ENCODE measurements at regions of chr7 and their contacts with region 1.

Region 1: GRCh38 chr7:115145512-115145911 is 223.6 kb downstream of the MDFIC start:
- H3K4me3 Mint-ChIP-seq: no peak overlapping the region
- H3K27ac Mint-ChIP-seq: peak overlapping the region; percentile 71
- H3K4me1 Mint-ChIP-seq: peaks cover 12% of the 10 kb centered on the region
- H3K27me3 Mint-ChIP-seq: no peaks in the 10 kb centered on the region

Region 2: DNA sequence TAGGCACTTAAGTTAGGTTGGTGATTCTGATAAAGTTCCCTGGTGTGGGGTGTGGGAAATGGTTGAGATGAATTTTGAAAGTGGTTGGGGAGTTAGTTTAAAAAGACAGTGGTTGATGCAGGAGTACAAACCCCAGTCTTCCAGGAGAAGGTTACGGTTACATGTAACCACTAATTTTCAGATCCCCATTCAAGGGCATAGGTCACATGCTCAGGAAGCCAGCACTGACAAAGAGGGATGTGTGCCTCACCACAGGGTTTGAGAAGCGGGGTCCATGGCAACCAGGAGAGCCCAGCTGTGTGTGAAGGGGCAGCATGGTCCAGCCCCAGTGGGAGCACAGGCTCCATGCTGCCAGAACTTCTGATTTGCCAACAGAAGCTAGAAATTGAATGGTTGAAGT is 79.5 kb before region 1 on chr7:
- intact Hi-C with region 1: loop called (anchors 5 kb)
- H3K4me3 Mint-ChIP-seq: no peak overlapping the region
- H3K27ac Mint-ChIP-seq: peak overlapping the region; percentile 21
- H3K4me1 Mint-ChIP-seq: peaks cover 28% of the 10 kb centered on the region
- H3K27me3 Mint-ChIP-seq: no peaks in the 10 kb centered on the region

Measured in dendritic cell treated with granulocyte-macrophage colony-stimulating factor and Interleukin-4, amounts not matched to agents 40 ng/mL and 50 ng/mL, for 4 days (primary cell).